CD8-positive, alpha-beta T cell (primary cell): ENCODE measurements at regions of chr3 and their contacts with region 1.

Region 1: DNA sequence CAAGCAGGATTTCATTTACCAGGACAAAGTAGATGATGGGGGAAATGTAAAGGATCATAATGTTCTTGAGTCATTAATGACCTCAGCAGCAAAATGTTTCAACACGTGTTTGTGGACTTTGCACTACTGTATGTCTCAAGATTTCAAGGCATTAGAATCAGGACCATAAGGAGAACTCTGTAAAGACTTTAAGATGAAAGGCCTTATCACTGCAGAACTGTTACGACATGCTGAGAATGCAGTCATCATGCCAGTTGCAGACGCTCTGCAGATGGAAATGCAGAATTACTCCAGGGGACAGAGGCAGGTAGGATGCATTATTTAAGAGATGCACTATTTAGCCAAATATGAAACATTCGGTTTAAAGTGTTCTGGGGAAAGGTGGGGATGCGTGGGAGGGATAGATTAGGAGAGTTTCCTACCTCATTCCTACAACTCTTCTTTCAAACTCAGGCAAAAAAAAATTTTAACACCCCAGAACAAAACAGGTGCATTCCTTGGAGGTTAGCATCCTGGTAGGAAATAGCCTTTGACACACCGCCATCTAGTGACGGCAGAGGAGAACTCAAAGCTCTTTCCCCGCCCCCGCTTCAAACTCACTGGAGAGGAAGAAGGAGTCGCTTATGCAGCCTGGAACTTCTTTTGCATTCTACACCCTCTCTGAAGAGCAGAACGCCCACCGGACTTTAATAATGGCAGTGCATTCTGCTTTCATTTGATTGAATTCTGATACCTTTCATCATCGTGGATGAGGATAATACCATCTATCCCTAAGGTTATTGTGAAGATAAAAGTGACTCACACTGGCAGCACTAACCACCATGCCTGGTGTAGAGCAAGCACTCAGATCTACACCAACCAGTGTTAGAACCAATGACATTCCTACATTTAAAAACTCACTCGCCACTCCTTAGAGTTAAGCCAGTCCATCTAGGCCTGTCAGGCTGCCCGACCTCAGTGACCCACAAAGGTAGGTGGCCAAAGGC is 43.1 kb upstream of the TOPAZ1 start:
- DNase-seq: peak; percentile 26 to 78 (median 65)
- ATAC-seq: peak; percentile 78
- H3K4me3 ChIP-seq: no peak overlapping the region
- H3K4me3 Mint-ChIP-seq: no peak overlapping the region
- H3K27ac ChIP-seq: no peak overlapping the region
- H3K27ac Mint-ChIP-seq: no peak overlapping the region
- H3K4me1 ChIP-seq: no peaks in the 10 kb centered on the region
- H3K4me1 Mint-ChIP-seq: peaks cover 4% of the 10 kb centered on the region
- H3K27me3 ChIP-seq: peaks cover 0 to 3% of the 10 kb centered on the region in 2 experiments
- H3K27me3 Mint-ChIP-seq: peaks cover 24% of the 10 kb centered on the region
- CTCF ChIP-seq: peak; percentile 76

Region 2: DNA sequence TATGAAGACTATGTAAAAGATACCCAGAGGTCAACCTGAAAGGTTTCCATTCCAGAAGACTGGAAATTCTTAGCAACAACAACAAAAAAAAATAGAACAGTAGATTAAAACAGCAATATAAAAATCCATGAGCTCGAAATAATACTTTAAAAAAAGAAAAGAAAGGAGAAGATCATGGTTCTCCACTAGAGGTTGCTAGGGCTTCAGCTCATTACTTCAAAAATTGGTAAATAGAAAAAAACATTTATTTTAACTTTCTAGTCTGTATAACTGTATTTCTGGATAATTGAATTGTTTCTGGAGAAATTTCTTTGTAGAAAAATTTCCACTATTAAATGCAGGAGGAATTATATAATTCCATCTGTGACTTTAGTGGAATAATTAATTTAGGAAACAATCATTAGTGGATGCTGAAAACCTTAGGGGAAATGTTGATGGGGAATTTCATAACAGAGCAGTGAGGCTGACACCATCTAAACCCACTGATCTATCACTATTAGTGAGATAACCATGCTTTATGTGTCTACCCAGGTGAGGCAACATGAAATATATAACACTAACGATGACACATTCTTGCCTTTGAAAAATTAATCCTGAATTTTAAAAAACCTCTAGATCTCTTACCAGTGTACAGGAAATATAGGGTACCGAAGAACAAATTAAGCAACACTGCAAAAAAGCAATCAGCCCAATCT is 974.8 kb before region 1 on chr3:
- CTCF ChIA-PET with region 1: no interaction called
- POLR2A ChIA-PET with region 1: no interaction called
- intact Hi-C with region 1: loop called in 1 of 2 experiments (anchors 10 kb)
- DNase-seq: peak in 2 of 9 experiments; percentile 50 to 58
- ATAC-seq: peak; percentile 30
- H3K4me3 ChIP-seq: no peak overlapping the region
- H3K4me3 Mint-ChIP-seq: no peak overlapping the region
- H3K27ac ChIP-seq: no peak overlapping the region
- H3K27ac Mint-ChIP-seq: peak overlapping the region; percentile 81
- H3K4me1 ChIP-seq: peaks cover 58% of the 10 kb centered on the region
- H3K4me1 Mint-ChIP-seq: peaks cover 64% of the 10 kb centered on the region
- H3K27me3 ChIP-seq: no peaks in the 10 kb centered on the region
- H3K27me3 Mint-ChIP-seq: no peaks in the 10 kb centered on the region
- CTCF ChIP-seq: peak; percentile 78

Region 3: DNA sequence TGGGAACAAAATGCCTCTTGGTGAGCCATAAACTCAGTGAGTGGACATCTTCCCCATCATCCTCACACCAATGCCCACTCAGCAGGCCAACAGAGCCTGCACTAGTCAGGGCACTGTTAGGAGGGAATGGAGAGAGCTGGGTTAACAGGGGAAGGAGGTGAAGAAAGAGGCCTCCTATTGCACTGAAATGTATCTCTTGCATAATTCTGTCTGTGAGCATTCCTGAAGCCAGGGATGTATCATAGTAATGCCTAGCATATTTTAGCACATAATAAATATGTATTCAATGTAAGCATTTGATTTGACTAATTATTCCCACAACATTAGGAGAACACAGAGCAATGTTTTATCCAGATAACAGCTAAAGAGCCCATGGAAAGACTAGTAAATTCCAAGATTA is 658.0 kb before region 1 on chr3:
- CTCF ChIA-PET with region 1: interaction called, 29 read pairs
- POLR2A ChIA-PET with region 1: interaction called, 3 read pairs
- intact Hi-C with region 1: loop called (anchors 1 to 2 kb)
- DNase-seq: no peak
- ATAC-seq: no peak
- H3K4me3 ChIP-seq: no peak overlapping the region
- H3K4me3 Mint-ChIP-seq: no peak overlapping the region
- H3K27ac ChIP-seq: no peak overlapping the region
- H3K27ac Mint-ChIP-seq: no peak overlapping the region
- H3K4me1 ChIP-seq: no peaks in the 10 kb centered on the region
- H3K4me1 Mint-ChIP-seq: no peaks in the 10 kb centered on the region
- H3K27me3 ChIP-seq: no peaks in the 10 kb centered on the region
- H3K27me3 Mint-ChIP-seq: no peaks in the 10 kb centered on the region
- CTCF ChIP-seq: no peak

Region 4: GRCh38 chr3:43769471-43770425 is 428.8 kb before region 1 on chr3:
- CTCF ChIA-PET with region 1: no interaction called
- POLR2A ChIA-PET with region 1: no interaction called
- intact Hi-C with region 1: loop called (anchors 1 to 2 kb)
- DNase-seq: peak; percentile 56 to 86 (median 73)
- ATAC-seq: peak; percentile 67
- H3K4me3 ChIP-seq: no peak overlapping the region
- H3K4me3 Mint-ChIP-seq: peak overlapping the region; percentile 1
- H3K27ac ChIP-seq: no peak overlapping the region
- H3K27ac Mint-ChIP-seq: no peak overlapping the region
- H3K4me1 ChIP-seq: peaks cover 8% of the 10 kb centered on the region
- H3K4me1 Mint-ChIP-seq: peaks cover 22% of the 10 kb centered on the region
- H3K27me3 ChIP-seq: no peaks in the 10 kb centered on the region
- H3K27me3 Mint-ChIP-seq: peaks cover 9% of the 10 kb centered on the region
- CTCF ChIP-seq: peak; percentile 81

Region 5: DNA sequence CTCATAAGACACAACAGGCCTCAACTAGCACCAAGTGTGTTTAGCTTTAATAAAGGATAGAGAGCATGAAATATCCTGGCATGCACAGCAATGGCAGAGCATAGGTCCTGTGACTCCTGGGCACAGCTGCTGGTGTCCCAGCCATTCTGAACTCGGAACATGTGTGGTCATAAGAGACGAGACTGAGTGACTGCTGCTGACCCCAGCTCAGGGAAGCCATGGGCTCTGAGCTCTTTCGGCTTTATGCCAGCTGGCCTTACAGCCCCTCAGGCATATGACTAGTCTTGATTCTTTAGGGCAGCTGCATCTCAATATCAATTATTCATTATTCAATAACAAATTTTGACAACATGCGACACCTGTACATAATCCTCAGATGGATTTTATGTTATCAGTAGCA is 19.3 kb before region 1 on chr3:
- CTCF ChIA-PET with region 1: no interaction called
- POLR2A ChIA-PET with region 1: interaction called, 3 read pairs
- intact Hi-C with region 1: loop called in 1 of 2 experiments (anchors 2 kb)
- DNase-seq: no peak
- ATAC-seq: no peak
- H3K4me3 ChIP-seq: no peak overlapping the region
- H3K4me3 Mint-ChIP-seq: no peak overlapping the region
- H3K27ac ChIP-seq: no peak overlapping the region
- H3K27ac Mint-ChIP-seq: no peak overlapping the region
- H3K4me1 ChIP-seq: no peaks in the 10 kb centered on the region
- H3K4me1 Mint-ChIP-seq: no peaks in the 10 kb centered on the region
- H3K27me3 ChIP-seq: peaks cover 0 to 2% of the 10 kb centered on the region in 2 experiments
- H3K27me3 Mint-ChIP-seq: peaks cover 17% of the 10 kb centered on the region
- CTCF ChIP-seq: no peak

Region 6: GRCh38 chr3:44186111-44186672 is 12.4 kb before region 1 on chr3:
- CTCF ChIA-PET with region 1: interaction called, 19 read pairs
- POLR2A ChIA-PET with region 1: interaction called, 3 read pairs
- intact Hi-C with region 1: no loop called
- DNase-seq: no peak
- ATAC-seq: no peak
- H3K4me3 ChIP-seq: no peak overlapping the region
- H3K4me3 Mint-ChIP-seq: no peak overlapping the region
- H3K27ac ChIP-seq: no peak overlapping the region
- H3K27ac Mint-ChIP-seq: no peak overlapping the region
- H3K4me1 ChIP-seq: no peaks in the 10 kb centered on the region
- H3K4me1 Mint-ChIP-seq: no peaks in the 10 kb centered on the region
- H3K27me3 ChIP-seq: no peaks in the 10 kb centered on the region
- H3K27me3 Mint-ChIP-seq: peaks cover 25% of the 10 kb centered on the region
- CTCF ChIP-seq: no peak